ENCODE measurements at regions of chr1 and their contacts with region 1.

Region 1: GRCh38 chr1:113759333-113760101 is at the start of gene PHTF1:
- DNase-seq: peak; percentile 80
- ATAC-seq: peak; percentile 88
- H3K4me3 Mint-ChIP-seq: peak within 1 kb of the TSS; percentile 89
- H3K27ac Mint-ChIP-seq: peak within 1 kb of the TSS; percentile 93
- H3K4me1 Mint-ChIP-seq: peaks cover 36% of the 10 kb centered on the region
- H3K27me3 Mint-ChIP-seq: no peaks in the 10 kb centered on the region
- total RNA-seq, gene PHTF1: 27.8 to 30.4 TPM

Region 2: DNA sequence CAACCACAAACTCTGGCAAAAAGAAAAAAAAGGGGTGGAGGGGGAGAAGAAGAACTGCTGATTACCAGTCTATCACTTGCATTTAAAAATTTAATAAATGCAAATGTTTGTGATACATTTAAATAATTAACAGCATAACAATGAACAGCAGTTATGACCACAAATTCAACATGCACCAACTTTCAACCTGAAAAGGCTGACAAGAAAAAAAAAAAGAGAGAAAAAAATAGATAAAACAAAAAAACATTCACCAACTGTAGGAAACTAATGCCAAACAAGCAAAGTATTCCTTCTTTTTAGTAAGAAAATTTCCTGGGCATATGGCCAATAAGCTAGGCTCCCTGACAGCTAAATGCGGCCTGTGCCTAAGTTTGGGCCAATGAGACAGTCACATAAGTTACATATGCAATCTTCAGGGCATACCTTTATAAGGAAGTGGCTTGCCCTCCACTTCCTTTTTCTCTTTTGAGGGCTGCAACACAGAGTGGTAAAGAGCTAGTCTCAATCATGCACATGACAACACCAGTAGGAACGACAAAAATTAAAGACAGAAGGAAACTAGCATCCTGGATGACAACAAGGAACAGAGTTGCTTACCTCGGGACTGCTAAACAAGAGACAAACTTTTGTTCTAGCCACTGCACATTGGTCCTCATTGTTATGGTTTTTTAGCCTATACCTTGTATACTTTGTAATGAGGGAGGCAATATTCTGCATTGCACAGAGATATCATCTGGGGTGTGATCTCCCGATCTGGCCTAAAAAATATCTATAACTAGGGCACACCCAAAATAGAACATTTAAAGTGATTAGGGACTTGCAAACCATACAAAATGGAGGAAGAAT is 24.0 kb after region 1 on chr1:
- CTCF ChIA-PET with region 1: interaction called, 11 read pairs
- DNase-seq: peak; percentile 78
- ATAC-seq: peak; percentile 96
- H3K4me3 Mint-ChIP-seq: peak overlapping the region; percentile 55
- H3K27ac Mint-ChIP-seq: peak overlapping the region; percentile 98
- H3K4me1 Mint-ChIP-seq: peaks cover 35% of the 10 kb centered on the region
- H3K27me3 Mint-ChIP-seq: no peaks in the 10 kb centered on the region

Region 3: GRCh38 chr1:113821916-113822315 is 62.4 kb after region 1 on chr1:
- CTCF ChIA-PET with region 1: no interaction called
- DNase-seq: no peak
- ATAC-seq: no peak
- H3K4me3 Mint-ChIP-seq: no peak overlapping the region
- H3K27ac Mint-ChIP-seq: peak overlapping the region; percentile 4
- H3K4me1 Mint-ChIP-seq: no peaks in the 10 kb centered on the region
- H3K27me3 Mint-ChIP-seq: no peaks in the 10 kb centered on the region

Measured in activated CD8-positive, alpha-beta memory T cell treated with anti-CD3 and anti-CD28 coated beads, Interleukin-2, amount 10 ng/mL, durations not matched to agents 7 days and 5 days (primary cell).